Activated T-helper 2 cell treated with anti-CD3 and anti-CD28 coated beads, Interferon-gamma antibody, Interleukin-2, Interleukin-4, amounts not matched to agents 10 μg/mL and 5 μg/mL and 100 μg/mL, durations not matched to agents 14 hours and 24 hours and 36 hours (primary cell): ENCODE measurements at regions of chr13 and their contacts with region 1.

Region 1: DNA sequence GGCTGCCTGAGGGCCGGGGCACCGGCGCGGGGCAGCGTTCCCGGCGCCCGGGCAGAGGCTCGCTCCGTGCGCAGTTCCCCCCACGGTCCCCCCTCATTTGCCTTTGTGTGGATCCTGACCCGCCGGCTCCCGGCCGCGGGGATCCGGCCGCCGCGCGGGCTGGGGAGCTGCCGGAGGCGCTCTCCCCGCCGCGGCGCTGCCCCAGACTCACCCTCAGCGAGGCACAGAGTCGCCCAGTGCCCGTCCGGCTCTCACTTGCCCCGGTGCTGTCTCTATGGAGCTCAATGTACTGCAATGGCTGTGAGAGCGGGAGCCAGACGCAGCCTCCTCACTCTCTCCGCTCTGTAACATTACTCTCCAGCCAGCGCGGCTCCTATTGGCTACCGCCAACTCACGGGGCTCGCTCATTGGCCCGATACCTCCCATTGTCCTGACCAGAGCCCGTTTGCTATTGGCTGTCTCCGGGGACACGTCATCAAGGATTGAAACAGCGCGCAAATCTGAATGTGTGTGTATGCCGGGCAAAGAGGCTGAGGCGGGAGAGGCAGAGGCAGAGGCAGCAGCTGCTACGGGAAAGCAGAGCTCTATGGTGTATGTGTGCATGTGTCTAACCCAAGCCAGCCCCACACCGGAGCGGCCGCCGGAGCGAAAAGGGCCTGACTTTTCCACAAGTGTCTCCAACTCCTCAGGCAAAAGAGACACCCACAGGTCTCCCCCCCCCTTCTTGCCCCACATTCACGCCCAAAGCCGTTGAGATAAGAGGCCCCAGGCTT is at the start of gene HMGB1:
- DNase-seq: peak; percentile 98
- H3K4me3 Mint-ChIP-seq: peak within 1 kb of the TSS; percentile 94
- H3K27ac Mint-ChIP-seq: peak within 1 kb of the TSS; percentile 100
- H3K4me1 Mint-ChIP-seq: peaks cover 26% of the 10 kb centered on the region
- H3K27me3 Mint-ChIP-seq: no peaks in the 10 kb centered on the region
- total RNA-seq, gene HMGB1: 594 and 603 TPM in 2 replicates

Region 2: DNA sequence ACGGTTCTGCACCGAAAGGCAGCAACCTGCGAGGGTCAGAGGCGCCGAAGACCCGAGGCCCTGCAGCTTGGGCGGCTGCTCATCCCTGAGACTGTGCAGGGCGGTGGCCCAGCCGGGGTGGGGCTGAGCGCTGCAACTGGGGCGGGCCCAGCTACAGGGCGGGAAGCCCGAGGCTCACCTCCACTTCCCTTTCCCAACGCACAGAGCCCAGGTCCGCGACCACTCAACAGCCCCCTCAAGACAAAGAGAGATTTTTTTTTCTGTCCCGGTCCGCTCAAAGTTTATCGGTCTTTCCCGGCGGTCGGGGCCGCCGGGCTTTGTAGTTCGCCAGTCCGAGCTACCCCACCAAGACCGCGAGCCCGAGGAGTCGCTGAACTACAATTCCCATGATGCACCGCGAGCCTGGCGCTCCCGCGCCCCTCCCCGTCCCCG is 159.0 kb before region 1 on chr13:
- intact Hi-C with region 1: loop called (anchors 2 kb)
- DNase-seq: peak; percentile 88
- H3K4me3 Mint-ChIP-seq: peak overlapping the region; percentile 86
- H3K27ac Mint-ChIP-seq: peak overlapping the region; percentile 80
- H3K4me1 Mint-ChIP-seq: peaks cover 38% of the 10 kb centered on the region
- H3K27me3 Mint-ChIP-seq: no peaks in the 10 kb centered on the region

Region 3: GRCh38 chr13:30408319-30409101 is 57.3 kb before region 1 on chr13:
- intact Hi-C with region 1: loop called (anchors 1 kb)
- DNase-seq: peak; percentile 89
- H3K4me3 Mint-ChIP-seq: no peak overlapping the region
- H3K27ac Mint-ChIP-seq: peak overlapping the region; percentile 40
- H3K4me1 Mint-ChIP-seq: peaks cover 21% of the 10 kb centered on the region
- H3K27me3 Mint-ChIP-seq: no peaks in the 10 kb centered on the region

Region 4: DNA sequence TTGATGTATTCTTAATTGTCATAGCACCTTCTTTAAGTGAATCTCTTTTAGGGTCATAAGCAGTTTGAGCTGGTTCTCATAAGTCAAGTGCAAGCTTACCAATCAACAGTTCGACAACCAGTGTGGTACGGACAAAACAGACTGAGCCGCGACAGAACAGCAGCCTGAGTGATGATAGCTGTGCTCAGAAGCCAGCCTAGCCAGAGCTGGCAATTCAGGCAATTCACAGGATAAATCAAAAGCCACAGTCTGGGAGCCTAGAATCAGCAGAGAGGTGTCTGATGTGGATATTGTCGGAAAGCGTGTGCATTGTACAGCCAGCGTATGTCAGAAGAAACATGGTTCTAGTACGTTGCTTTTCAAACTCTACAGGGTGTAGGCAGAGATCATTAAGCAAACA is 28.6 kb before region 1 on chr13:
- intact Hi-C with region 1: no loop called
- DNase-seq: no peak
- H3K4me3 Mint-ChIP-seq: no peak overlapping the region
- H3K27ac Mint-ChIP-seq: no peak overlapping the region
- H3K4me1 Mint-ChIP-seq: peaks cover 11% of the 10 kb centered on the region
- H3K27me3 Mint-ChIP-seq: peaks cover 13% of the 10 kb centered on the region

Region 5: GRCh38 chr13:30477346-30478195 is 11.8 kb after region 1 on chr13:
- intact Hi-C with region 1: no loop called
- DNase-seq: no peak
- H3K4me3 Mint-ChIP-seq: no peak overlapping the region
- H3K27ac Mint-ChIP-seq: no peak overlapping the region
- H3K4me1 Mint-ChIP-seq: no peaks in the 10 kb centered on the region
- H3K27me3 Mint-ChIP-seq: peaks cover 15% of the 10 kb centered on the region

Region 6: GRCh38 chr13:30504081-30504480 is 38.3 kb after region 1 on chr13:
- intact Hi-C with region 1: loop called (anchors 2 kb)
- DNase-seq: peak; percentile 44
- H3K4me3 Mint-ChIP-seq: no peak overlapping the region
- H3K27ac Mint-ChIP-seq: peak overlapping the region; percentile 39
- H3K4me1 Mint-ChIP-seq: peaks cover 17% of the 10 kb centered on the region
- H3K27me3 Mint-ChIP-seq: peaks cover 1% of the 10 kb centered on the region

Region 7: GRCh38 chr13:30673669-30674521 is 208.1 kb after region 1 on chr13:
- intact Hi-C with region 1: loop called (anchors 10 kb)
- DNase-seq: peak; percentile 85
- H3K4me3 Mint-ChIP-seq: peak overlapping the region; percentile 86
- H3K27ac Mint-ChIP-seq: peak overlapping the region; percentile 73
- H3K4me1 Mint-ChIP-seq: peaks cover 18% of the 10 kb centered on the region
- H3K27me3 Mint-ChIP-seq: peaks cover 29% of the 10 kb centered on the region